A549 (cell line): ENCODE measurements at regions of chr1 and their contacts with region 1.

Region 1: GRCh38 chr1:231315887-231316286 is 21.8 kb downstream of the EXOC8 start:
- DNase-seq: peak; percentile 33 to 58
- ATAC-seq: peak; percentile 79 to 98
- H3K4me3 ChIP-seq: no peak overlapping the region
- H3K27ac ChIP-seq: no peak overlapping the region
- H3K4me1 ChIP-seq: no peaks in the 10 kb centered on the region
- CTCF ChIP-seq: peak; percentile 61
- EP300 ChIP-seq: no peak
- POLR2A ChIP-seq: no peak
- RAD21 ChIP-seq: peak; percentile 57 to 73

Region 2: DNA sequence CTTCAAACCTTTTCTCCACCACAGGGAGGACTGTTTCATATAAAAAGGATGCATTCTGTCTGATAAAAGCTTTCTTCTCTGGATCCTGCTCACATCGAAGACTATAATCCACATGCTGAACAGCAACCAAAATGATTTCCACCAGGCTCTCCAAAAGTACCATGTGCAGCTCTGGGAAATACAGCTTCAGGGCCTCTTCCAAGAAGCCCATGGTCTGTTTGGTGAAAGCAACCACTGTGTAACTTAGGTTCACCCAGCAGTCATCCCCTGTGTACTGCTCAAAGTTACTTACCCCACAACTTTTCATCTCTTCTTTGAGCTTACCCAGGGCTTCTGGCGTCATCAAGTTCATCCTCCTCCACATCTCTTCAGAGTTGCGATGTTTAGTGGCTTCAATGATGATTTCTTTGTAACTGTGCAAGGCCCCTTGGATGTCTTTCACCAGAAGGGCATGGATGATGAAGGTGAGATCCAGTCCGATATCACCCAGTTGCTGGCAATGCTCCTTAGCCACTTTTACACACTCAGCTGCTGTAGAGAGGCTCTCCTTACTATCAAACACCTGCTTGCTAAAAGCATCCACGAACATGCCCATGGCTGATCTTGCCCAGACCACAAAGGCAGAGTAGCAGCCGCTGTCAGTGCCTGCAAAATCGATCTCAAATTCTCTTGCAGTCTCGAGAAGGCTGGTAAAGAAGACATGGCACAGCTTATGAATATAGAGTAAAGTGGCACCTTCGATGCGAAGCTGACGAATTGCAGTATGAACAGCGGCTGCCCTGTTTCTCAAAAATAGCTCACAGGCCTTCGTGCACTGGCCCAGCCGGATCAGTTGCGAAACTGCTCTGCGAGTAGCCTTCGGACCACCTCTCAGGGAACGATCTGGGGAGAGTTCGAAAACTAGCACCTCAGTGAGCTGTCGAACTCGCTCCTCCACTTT is 20.0 kb after region 1 on chr1:
- CTCF ChIA-PET with region 1: interaction called, 11 read pairs
- POLR2A ChIA-PET with region 1: no interaction called
- DNase-seq: no peak
- ATAC-seq: no peak
- H3K4me3 ChIP-seq: peak overlapping the region; percentile 82
- H3K27ac ChIP-seq: peak overlapping the region in 1 of 2 experiments; percentile 91; a peak in 2 of 6 replicates
- H3K4me1 ChIP-seq: peaks cover 46% of the 10 kb centered on the region
- CTCF ChIP-seq: no peak
- EP300 ChIP-seq: no peak
- POLR2A ChIP-seq: no peak
- RAD21 ChIP-seq: no peak

Region 3: GRCh38 chr1:231421993-231422764 is 106.3 kb after region 1 on chr1 and contains the start of gene EGLN1:
- CTCF ChIA-PET with region 1: no interaction called
- POLR2A ChIA-PET with region 1: no interaction called
- DNase-seq: peak; percentile 51 to 93
- ATAC-seq: peak; percentile 82 to 85
- H3K4me3 ChIP-seq: peak within 1 kb of the TSS; percentile 80
- H3K27ac ChIP-seq: peak within 1 kb of the TSS; percentile 87 to 99
- H3K4me1 ChIP-seq: peaks cover 28% of the 10 kb centered on the region
- CTCF ChIP-seq: peak; percentile 20; the same call in 2 of the 3 replicates
- EP300 ChIP-seq: peak in 1 of 2 experiments; percentile 22; a peak in 1 of 5 replicates
- POLR2A ChIP-seq: peak; percentile 82
- RAD21 ChIP-seq: peak; percentile 37 to 58
- polyA plus RNA-seq, gene EGLN1: 114 and 156 TPM in 2 replicates

Region 4: GRCh38 chr1:231512147-231512698 is 196.3 kb after region 1 on chr1:
- CTCF ChIA-PET with region 1: no interaction called
- POLR2A ChIA-PET with region 1: no interaction called
- DNase-seq: peak; percentile 19 to 72
- ATAC-seq: peak; percentile 78 to 84
- H3K4me3 ChIP-seq: no peak overlapping the region
- H3K27ac ChIP-seq: peak overlapping the region; percentile 64 to 79
- H3K4me1 ChIP-seq: peaks cover 22% of the 10 kb centered on the region; the same call in 2 of the 3 replicates
- CTCF ChIP-seq: no peak
- EP300 ChIP-seq: peak; percentile 63 to 93; a peak in 3 of 5 replicates
- POLR2A ChIP-seq: no peak
- RAD21 ChIP-seq: no peak